ENCODE measurements at regions of chr20 and their contacts with region 1.

Region 1: DNA sequence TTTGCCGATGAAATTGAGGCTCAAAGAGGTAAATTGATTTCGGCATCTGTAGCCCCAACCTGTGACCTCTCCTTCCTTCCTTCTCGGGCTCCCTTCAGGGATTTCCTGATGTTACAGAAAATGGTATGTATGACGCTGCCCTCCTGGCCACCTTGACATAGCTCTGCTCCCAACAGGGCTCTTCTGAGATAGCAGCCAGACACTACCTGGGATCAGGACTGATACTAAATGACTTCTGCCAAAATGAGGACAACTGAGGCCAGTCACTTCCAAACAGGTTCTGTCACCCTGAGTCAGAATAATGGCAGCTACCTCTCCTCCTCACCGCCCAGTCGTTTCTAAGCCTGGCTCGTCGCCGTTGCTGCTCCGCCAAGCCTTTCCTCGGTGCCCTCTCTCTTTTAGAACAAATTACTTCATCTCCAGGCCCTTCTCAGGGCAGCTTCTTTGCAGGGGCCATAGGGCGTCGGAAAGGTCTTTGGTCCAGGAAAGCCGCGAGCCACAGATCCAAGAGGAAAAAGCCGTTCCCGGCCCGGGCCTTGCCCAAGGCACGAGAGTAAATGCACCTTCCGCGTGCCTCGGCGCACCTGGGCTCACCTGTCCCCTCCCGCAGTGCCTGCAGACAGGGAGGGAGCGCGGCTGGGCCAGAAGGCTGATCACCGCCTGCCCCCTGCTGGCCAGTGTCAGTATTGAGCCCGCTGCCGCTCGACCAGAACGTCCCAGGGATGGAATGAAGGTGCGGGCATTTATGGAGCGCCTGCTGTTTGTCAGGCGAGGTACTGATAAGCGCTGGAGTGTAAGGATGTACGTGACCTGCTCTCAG is 904 bp upstream of the LPIN3 start:
- DNase-seq: peak; percentile 87
- H3K4me3 Mint-ChIP-seq: peak overlapping the region; percentile 73
- H3K27ac Mint-ChIP-seq: no peak overlapping the region
- H3K4me1 Mint-ChIP-seq: peaks cover 11% of the 10 kb centered on the region
- H3K27me3 Mint-ChIP-seq: peaks cover 2% of the 10 kb centered on the region

Region 2: DNA sequence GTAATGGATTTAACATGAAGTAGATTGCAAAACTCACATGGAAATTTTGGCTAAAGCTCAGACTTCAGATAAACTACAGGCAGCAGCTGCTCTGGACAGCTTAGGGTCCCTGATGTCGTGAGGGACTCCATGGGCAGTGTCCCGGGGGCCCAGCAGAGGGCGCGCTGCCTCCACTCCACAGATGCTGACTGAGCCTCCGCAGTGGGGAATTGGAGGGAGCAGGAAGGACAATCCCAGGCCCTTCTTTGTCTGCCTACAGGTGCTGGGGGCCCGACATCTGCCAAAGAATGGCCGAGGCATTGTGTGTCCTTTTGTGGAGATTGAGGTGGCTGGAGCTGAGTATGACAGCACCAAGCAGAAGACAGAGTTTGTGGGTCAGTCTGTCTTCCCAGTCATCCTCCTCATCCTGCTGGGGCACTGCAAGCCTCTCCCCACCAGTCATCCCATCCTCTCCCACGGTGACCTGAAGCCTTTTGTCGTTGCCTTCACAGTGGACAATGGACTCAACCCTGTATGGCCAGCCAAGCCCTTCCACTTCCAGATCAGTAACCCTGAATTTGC is 166.5 kb before region 1 on chr20:
- CTCF ChIA-PET with region 1: interaction called, 7 read pairs
- intact Hi-C with region 1: loop called (anchors 1 kb)
- DNase-seq: peak; percentile 75
- H3K4me3 Mint-ChIP-seq: no peak overlapping the region
- H3K27ac Mint-ChIP-seq: peak overlapping the region; percentile 36
- H3K4me1 Mint-ChIP-seq: peaks cover 4% of the 10 kb centered on the region
- H3K27me3 Mint-ChIP-seq: no peaks in the 10 kb centered on the region

Region 3: DNA sequence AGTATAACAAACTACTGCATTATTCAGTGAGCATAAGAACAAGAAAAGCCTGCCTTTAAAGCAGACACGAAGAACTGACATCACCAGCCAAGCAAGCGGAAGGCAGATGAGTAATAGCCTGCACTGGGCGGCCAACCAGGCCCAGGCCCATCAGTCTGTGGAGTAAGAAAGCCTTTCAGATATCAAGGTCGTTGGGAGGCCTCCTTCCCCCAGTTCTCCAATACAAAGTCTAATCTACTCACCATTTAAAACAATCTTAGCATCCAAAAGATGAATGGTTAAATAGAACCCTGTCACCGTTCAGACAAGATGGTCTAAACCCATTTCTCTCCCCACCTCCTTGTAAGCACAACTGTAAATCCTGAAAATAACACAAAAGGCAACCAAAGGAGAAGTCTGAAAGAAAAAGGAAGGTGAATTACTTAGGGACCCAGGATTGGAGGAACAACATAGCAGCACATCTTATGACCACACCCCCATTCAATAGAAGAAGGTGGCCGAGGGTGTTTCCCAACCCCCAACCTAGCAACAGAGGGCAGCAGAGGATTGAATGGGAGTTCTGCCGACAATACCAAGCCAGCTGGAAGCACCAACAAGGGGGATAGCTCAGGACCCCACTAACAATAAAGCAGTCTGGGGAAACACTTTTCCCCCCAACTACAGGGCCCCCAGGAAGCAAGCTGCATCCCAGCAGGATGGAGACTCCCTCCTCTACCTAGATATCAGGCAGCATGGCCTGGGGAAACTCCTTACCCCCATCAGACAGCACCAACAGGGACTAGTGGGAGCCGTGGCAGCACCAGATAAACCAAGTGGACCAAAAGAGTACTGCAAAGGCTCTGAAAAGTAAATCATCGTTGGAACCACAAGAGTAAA is 90.1 kb before region 1 on chr20:
- CTCF ChIA-PET with region 1: interaction called, 5 read pairs
- intact Hi-C with region 1: loop called (anchors 5 kb)
- DNase-seq: no peak
- H3K4me3 Mint-ChIP-seq: no peak overlapping the region
- H3K27ac Mint-ChIP-seq: no peak overlapping the region
- H3K4me1 Mint-ChIP-seq: no peaks in the 10 kb centered on the region
- H3K27me3 Mint-ChIP-seq: no peaks in the 10 kb centered on the region

Region 4: DNA sequence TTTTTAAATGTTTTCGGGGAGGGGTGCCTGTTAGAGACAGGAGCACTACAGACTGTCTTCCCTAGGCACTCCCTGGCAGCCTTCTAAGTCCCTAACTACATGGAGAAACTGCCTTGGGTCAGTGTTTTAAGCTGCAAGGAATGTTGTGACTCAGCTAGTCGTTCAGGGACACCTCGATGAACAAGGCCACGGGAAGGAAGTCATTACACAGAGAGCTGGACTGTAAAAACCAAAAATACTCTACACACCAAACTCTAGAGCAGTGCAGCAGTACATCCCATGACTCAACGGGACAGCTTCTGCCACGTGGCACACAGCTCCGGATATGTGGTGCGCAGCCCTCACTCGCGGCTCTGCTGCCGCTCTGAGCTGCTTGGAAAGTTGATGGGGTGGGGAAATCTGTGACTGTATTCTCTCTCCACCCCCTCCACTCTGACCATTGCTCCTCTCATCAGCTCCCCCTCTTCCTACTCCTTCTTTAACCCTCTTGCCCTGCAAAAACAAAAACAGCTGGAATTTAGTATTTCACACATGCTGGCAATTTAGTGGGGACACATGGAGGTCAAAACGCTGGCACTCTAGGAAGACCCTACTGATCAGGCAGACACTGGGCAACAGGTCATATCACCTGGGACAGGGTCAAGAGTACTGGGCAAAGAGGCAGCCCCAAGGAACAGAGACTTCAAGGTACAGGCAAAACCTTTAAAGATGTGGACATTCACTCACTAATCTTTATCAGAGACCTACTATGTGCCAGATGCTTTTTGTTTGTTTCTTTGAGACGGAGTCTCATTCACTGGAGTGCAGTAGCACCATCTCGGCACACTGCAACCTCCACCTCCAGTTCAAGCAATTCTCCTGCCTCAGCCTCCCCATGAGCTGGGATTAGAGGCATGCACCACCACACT is 10.0 kb before region 1 on chr20:
- CTCF ChIA-PET with region 1: interaction called, 8 read pairs
- intact Hi-C with region 1: loop called (anchors 1 kb)
- DNase-seq: peak; percentile 82
- H3K4me3 Mint-ChIP-seq: peak overlapping the region; percentile 3
- H3K27ac Mint-ChIP-seq: peak overlapping the region; percentile 25
- H3K4me1 Mint-ChIP-seq: peaks cover 11% of the 10 kb centered on the region
- H3K27me3 Mint-ChIP-seq: no peaks in the 10 kb centered on the region

Region 5: DNA sequence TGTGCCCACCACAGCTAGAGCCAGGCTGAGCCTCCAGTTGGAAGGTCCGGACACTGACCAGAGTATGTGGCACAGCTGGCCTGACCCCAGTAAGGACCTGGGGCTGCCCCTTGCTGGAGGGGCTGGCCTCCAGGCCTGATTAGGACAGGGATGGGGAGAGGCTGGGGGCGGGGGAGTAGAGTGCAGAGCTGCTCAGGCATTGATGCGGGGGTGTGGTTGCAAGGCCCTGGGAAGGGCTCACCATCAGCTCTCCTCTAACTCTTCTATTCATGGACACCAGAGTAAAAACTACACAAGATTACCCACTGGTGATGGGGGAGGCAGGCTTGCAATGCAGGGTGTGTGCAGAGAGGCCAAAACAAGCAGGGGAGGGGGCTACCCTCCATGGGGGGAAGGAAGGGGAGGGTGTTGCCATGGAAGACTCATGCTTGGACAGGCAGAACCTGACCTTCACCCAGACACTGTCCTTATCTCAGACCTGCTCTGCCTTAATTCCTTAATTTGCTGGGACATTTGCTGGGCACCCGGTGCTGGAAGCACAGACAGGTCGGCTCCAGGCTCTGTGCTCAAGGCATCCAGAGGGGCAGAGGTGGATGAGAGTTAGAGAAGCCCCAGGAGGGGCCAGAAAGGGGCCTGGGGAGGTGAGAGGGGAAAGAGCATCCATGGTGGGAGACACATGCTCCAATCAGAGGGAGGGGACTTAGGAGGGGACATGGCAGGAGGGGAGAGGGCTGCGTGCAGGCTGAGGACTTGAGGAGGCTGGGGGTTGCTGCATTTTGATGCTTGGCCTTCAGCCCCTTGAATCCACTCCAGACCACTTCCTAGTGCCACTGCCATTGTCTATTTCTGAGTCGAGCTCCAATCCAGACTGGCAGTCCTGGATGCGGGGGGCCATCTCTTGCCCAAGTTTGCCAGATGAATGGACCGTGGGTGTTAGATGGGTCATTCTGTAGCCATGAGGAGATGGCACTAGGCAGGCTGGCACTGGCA is 34.5 kb after region 1 on chr20:
- CTCF ChIA-PET with region 1: no interaction called
- intact Hi-C with region 1: no loop called
- DNase-seq: no peak
- H3K4me3 Mint-ChIP-seq: no peak overlapping the region
- H3K27ac Mint-ChIP-seq: no peak overlapping the region
- H3K4me1 Mint-ChIP-seq: no peaks in the 10 kb centered on the region
- H3K27me3 Mint-ChIP-seq: peaks cover 17% of the 10 kb centered on the region

Region 6: GRCh38 chr20:41693136-41693979 is 353.6 kb after region 1 on chr20:
- CTCF ChIA-PET with region 1: no interaction called
- intact Hi-C with region 1: loop called (anchors 1 kb)
- DNase-seq: peak; percentile 86
- H3K4me3 Mint-ChIP-seq: peak overlapping the region; percentile 85
- H3K27ac Mint-ChIP-seq: peak overlapping the region; percentile 91
- H3K4me1 Mint-ChIP-seq: peaks cover 16% of the 10 kb centered on the region
- H3K27me3 Mint-ChIP-seq: peaks cover 2% of the 10 kb centered on the region

Region 7: GRCh38 chr20:41905199-41905598 is 565.5 kb after region 1 on chr20:
- CTCF ChIA-PET with region 1: no interaction called
- intact Hi-C with region 1: no loop called
- DNase-seq: no peak
- H3K4me3 Mint-ChIP-seq: no peak overlapping the region
- H3K27ac Mint-ChIP-seq: no peak overlapping the region
- H3K4me1 Mint-ChIP-seq: no peaks in the 10 kb centered on the region
- H3K27me3 Mint-ChIP-seq: no peaks in the 10 kb centered on the region

Measured in activated naive CD4-positive, alpha-beta T cell treated with anti-CD3 and anti-CD28 coated beads for 36 hours (primary cell).